ENCODE measurements at regions of chr18 and their contacts with region 1.

Region 1: DNA sequence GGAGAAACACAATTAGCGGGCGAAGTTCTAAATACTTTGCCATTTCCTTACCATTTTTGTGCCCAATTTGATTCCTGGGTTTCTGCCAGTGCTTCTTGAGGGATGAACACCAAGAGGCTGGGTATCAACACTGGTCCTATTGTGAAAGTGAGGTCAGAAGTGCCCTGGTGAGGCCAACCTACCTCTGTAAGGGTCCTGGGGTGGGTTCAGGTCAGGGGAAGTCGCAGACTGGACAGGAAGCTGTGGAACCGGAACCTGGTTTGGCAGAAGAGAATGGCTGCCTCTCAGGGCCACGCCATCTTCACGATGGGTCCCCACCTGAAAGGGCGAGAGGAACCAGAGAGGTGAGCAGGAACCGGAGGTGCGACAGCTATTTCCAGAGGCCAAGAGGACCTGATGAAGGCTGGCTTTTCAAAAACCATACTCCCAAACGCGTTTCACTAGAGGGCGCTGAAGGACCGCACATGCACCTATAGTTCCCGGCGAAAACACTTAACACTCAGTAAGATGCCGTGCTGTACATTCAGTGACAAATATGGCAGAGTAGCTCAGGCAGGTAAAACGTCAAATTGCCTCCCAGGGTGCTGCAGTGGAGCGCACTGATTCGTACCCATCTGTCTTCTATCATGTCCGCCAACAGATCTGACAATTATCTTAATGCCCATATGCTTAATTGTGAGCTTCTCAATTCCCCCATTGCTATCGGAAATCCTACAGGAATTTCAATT is 275.3 kb upstream of the CCDC68 start:
- DNase-seq: peak; percentile 52
- H3K4me3 ChIP-seq: no peak overlapping the region; a peak in 1 of 4 replicates
- H3K27ac ChIP-seq: peak overlapping the region in 1 of 2 experiments; percentile 80; a peak in 2 of 4 replicates
- H3K4me1 ChIP-seq: peaks cover 6 to 21% of the 10 kb centered on the region in 2 experiments; a peak in 3 of 4 replicates
- H3K27me3 ChIP-seq: no peaks in the 10 kb centered on the region
- CTCF ChIP-seq: peak; percentile 89
- EP300 ChIP-seq: no peak; a peak in 1 of 4 replicates
- RAD21 ChIP-seq: peak; percentile 96

Region 2: DNA sequence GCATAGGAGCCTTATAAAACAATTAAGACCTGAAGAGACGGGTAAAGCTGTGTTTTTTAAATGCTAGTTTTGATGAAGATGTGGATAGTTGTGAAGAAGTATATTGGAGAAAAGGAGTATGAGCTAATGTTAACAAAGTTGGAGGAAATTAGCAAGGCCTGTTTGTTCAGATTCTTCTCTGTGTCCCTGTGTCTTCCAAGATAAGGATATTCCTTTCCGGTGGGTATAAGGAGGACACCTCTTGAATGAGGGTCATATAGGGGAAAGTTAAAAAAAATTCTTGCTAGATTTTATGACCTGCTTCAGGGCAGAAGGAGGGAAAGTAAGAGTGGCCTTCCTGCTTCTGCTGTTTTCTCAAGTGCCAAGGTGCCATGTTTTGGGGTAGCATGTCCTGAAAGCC is 334.2 kb before region 1 on chr18:
- CTCF ChIA-PET with region 1: no interaction called
- POLR2A ChIA-PET with region 1: no interaction called
- DNase-seq: no peak
- H3K4me3 ChIP-seq: no peak overlapping the region
- H3K27ac ChIP-seq: no peak overlapping the region
- H3K4me1 ChIP-seq: no peaks in the 10 kb centered on the region; a peak in 2 of 4 replicates
- H3K27me3 ChIP-seq: no peaks in the 10 kb centered on the region
- CTCF ChIP-seq: no peak
- EP300 ChIP-seq: no peak
- RAD21 ChIP-seq: no peak

Region 3: DNA sequence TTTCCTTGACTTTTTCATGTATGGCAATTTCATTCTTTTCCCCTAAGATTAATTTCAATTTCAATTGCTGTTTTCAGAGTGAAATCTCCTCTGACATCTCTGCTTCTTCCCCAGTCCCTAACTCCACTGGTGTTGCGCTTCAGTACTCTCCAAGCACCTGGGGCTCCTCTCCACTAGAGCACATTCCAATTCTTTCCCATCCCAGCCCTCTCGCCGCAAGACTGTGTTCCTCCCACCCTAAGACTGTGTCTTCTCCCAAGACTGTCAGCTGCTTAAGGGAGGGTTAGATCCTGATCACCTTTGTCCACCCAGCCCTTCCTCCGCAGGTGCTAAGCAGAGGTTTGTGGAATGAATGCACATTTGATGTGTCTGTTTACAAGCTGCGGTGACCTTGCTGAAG is 19.6 kb before region 1 on chr18:
- CTCF ChIA-PET with region 1: interaction called, 11 read pairs
- POLR2A ChIA-PET with region 1: no interaction called
- DNase-seq: no peak
- H3K4me3 ChIP-seq: no peak overlapping the region
- H3K27ac ChIP-seq: no peak overlapping the region
- H3K4me1 ChIP-seq: no peaks in the 10 kb centered on the region; a peak in 1 of 4 replicates
- H3K27me3 ChIP-seq: no peaks in the 10 kb centered on the region
- CTCF ChIP-seq: no peak
- EP300 ChIP-seq: no peak
- RAD21 ChIP-seq: no peak

Region 4: DNA sequence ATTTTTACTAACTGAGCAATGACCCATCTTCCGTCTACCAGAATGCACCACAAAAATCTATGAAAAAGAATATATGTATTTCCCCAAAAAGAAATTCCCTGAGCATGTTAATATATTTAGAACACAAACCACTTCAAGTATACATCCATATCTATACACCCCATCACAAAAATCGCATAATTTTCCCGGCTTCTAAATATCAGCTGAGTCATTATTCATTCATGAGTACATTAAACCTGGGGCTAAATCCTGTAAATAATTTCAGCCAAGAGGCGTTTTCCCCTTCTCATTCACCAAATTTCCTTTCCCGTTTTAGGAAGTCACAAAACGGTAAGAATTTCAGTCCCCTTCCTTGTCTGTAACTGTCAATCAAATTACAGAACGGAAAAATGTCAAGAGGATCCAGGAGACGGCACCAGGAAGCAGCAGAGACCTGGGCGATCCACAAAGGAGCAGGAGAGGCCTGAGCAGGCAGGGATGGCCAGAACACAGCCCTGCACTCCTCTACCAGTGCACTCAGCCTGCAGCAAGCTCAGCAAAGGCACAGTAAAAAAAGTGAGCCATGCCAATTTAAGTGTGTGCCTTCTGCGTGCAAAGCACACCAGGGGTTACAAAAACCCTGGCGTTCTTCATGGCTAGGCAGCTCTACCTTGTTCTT is 52.7 kb after region 1 on chr18:
- CTCF ChIA-PET with region 1: interaction called, 23 read pairs
- POLR2A ChIA-PET with region 1: no interaction called
- DNase-seq: peak; percentile 29
- H3K4me3 ChIP-seq: peak overlapping the region; percentile 4 to 20; a peak in 1 of 4 replicates
- H3K27ac ChIP-seq: peak overlapping the region; percentile 77 to 87
- H3K4me1 ChIP-seq: peaks cover 21 to 63% of the 10 kb centered on the region in 2 experiments
- H3K27me3 ChIP-seq: no peaks in the 10 kb centered on the region
- CTCF ChIP-seq: no peak
- EP300 ChIP-seq: no peak
- RAD21 ChIP-seq: no peak; the same call in 1 of the 2 replicates

Region 5: GRCh38 chr18:55307505-55307904 is 73.0 kb after region 1 on chr18:
- CTCF ChIA-PET with region 1: interaction called, 28 read pairs
- POLR2A ChIA-PET with region 1: interaction called, 3 read pairs
- DNase-seq: no peak
- H3K4me3 ChIP-seq: no peak overlapping the region
- H3K27ac ChIP-seq: peak overlapping the region in 1 of 2 experiments; percentile 34; a peak in 2 of 4 replicates
- H3K4me1 ChIP-seq: peaks cover 18 to 63% of the 10 kb centered on the region in 2 experiments; a peak in 3 of 4 replicates
- H3K27me3 ChIP-seq: no peaks in the 10 kb centered on the region
- CTCF ChIP-seq: no peak
- EP300 ChIP-seq: no peak
- RAD21 ChIP-seq: no peak

Region 6: DNA sequence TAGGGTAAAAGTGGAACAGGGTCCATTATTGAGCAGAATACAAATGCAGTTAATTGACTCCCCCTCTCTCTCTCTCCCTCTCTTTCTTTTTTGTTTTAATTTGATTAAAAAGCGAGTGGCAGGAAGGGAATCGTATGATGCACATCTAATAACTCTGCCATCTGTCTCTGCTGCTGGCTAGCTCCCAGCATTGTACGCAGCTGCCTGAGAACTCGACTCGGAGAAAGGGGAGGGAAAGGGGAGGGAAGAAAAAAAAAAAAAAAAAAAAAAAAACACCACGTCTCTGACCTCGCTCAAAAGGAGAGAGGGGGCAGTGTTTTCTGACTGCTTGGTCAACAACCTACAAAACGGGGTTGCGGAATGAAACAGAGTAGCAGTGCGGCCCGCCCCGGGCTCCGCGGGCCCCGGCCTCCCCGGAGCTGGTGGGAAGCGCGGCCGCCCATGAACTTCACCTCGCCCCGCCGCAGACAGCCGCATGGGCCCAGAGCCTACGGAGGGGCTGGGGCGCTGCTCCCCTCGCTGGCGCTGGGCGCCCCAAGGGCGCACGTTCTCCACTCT is 87.7 kb after region 1 on chr18:
- CTCF ChIA-PET with region 1: interaction called, 36 read pairs
- POLR2A ChIA-PET with region 1: interaction called, 13 read pairs
- DNase-seq: peak; percentile 77
- H3K4me3 ChIP-seq: peak overlapping the region; percentile 78 to 80
- H3K27ac ChIP-seq: peak overlapping the region; percentile 95 to 100
- H3K4me1 ChIP-seq: peaks cover 31 to 33% of the 10 kb centered on the region in 2 experiments
- H3K27me3 ChIP-seq: no peaks in the 10 kb centered on the region
- CTCF ChIP-seq: peak; percentile 37; the same call in 1 of the 2 replicates
- EP300 ChIP-seq: peak; percentile 28 to 98; a peak in 3 of 4 replicates
- RAD21 ChIP-seq: peak; percentile 44; the same call in 1 of the 2 replicates

Region 7: DNA sequence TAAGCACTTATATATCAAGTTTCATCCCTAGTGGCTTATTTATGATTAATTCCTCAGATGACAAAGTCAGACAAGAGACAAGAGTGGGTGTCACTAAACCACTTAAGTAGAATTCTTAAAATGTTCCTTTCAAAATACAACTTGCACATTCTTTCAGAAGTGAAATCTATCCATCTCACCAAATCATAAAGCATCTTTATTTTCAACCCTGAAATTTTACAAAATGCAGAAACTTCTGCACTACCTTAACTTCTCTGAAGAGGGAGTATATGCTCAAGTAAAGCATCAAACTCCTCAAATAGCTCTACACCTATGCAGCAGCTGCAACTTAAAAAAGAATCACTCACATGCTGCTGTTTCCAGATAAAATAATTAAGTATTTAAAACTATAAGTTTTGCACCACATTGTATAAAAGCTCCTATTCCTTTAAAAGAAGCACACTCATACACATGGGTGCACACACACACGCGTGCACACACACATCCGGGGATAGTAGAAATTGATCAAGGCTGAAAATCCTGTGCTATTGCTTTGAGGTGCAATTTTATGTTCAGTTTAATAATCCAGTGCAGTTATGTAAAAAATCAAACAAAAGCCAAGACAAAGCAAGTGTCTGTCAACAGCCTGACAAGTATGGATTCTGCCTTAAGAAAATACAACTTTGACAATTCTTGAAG is 109.0 kb after region 1 on chr18:
- CTCF ChIA-PET with region 1: interaction called, 31 read pairs
- POLR2A ChIA-PET with region 1: no interaction called
- DNase-seq: no peak
- H3K4me3 ChIP-seq: no peak overlapping the region
- H3K27ac ChIP-seq: peak overlapping the region; percentile 15 to 43; a peak in 3 of 4 replicates
- H3K4me1 ChIP-seq: peaks cover 30 to 43% of the 10 kb centered on the region in 2 experiments
- H3K27me3 ChIP-seq: no peaks in the 10 kb centered on the region
- CTCF ChIP-seq: peak; percentile 79
- EP300 ChIP-seq: no peak
- RAD21 ChIP-seq: peak; percentile 86

Region 8: GRCh38 chr18:55415258-55415871 is 180.8 kb after region 1 on chr18:
- CTCF ChIA-PET with region 1: interaction called, 15 read pairs
- POLR2A ChIA-PET with region 1: no interaction called
- DNase-seq: peak; percentile 48
- H3K4me3 ChIP-seq: no peak overlapping the region; a peak in 1 of 4 replicates
- H3K27ac ChIP-seq: peak overlapping the region in 1 of 2 experiments; percentile 43; a peak in 2 of 4 replicates
- H3K4me1 ChIP-seq: peaks cover 27 to 34% of the 10 kb centered on the region in 2 experiments; a peak in 3 of 4 replicates
- H3K27me3 ChIP-seq: no peaks in the 10 kb centered on the region
- CTCF ChIP-seq: peak; percentile 97
- EP300 ChIP-seq: no peak
- RAD21 ChIP-seq: peak; percentile 93

Measured in SK-N-SH (cell line).